WTC11 (cell line): ENCODE measurements at regions of chr16 and their contacts with region 1.

Region 1: GRCh38 chr16:1983544-1984346 is at the start of gene GFER:
- DNase-seq: peak; percentile 95
- ATAC-seq: peak; percentile 78
- H3K4me3 Mint-ChIP-seq: peak within 1 kb of the TSS; percentile 81
- H3K27ac Mint-ChIP-seq: peak within 1 kb of the TSS; percentile 80
- H3K4me1 Mint-ChIP-seq: peaks cover 30% of the 10 kb centered on the region
- H3K27me3 Mint-ChIP-seq: peaks cover 42% of the 10 kb centered on the region
- CTCF ChIP-seq: no peak
- total RNA-seq, gene GFER: 56.0 to 58.5 TPM (median 57.0 TPM) in 3 replicates

Region 2: GRCh38 chr16:1884155-1884760 is 99.5 kb before region 1 on chr16:
- CTCF ChIA-PET with region 1: no interaction called
- POLR2A ChIA-PET with region 1: no interaction called
- DNase-seq: no peak
- ATAC-seq: no peak
- H3K4me3 Mint-ChIP-seq: no peak overlapping the region
- H3K27ac Mint-ChIP-seq: no peak overlapping the region
- H3K4me1 Mint-ChIP-seq: no peaks in the 10 kb centered on the region
- H3K27me3 Mint-ChIP-seq: peaks cover 4% of the 10 kb centered on the region; the same call in 1 of the 2 replicates
- CTCF ChIP-seq: no peak

Region 3: GRCh38 chr16:1964506-1965395 is 19.0 kb before region 1 on chr16 and contains the start of gene RPS2:
- CTCF ChIA-PET with region 1: interaction called, 4 read pairs
- POLR2A ChIA-PET with region 1: interaction called, 20 read pairs
- DNase-seq: peak; percentile 99
- ATAC-seq: peak; percentile 51
- H3K4me3 Mint-ChIP-seq: peak within 1 kb of the TSS; percentile 94
- H3K27ac Mint-ChIP-seq: peak within 1 kb of the TSS; percentile 97
- H3K4me1 Mint-ChIP-seq: peaks cover 39% of the 10 kb centered on the region
- H3K27me3 Mint-ChIP-seq: no peaks in the 10 kb centered on the region
- CTCF ChIP-seq: no peak
- total RNA-seq, gene RPS2: 4,395 to 4,767 TPM (median 4,632 TPM) in 3 replicates

Region 4: GRCh38 chr16:2121853-2122252 is 138.1 kb after region 1 on chr16:
- CTCF ChIA-PET with region 1: no interaction called
- POLR2A ChIA-PET with region 1: no interaction called
- DNase-seq: no peak
- ATAC-seq: no peak
- H3K4me3 Mint-ChIP-seq: no peak overlapping the region
- H3K27ac Mint-ChIP-seq: peak overlapping the region; percentile 19; the same call in 1 of the 2 replicates
- H3K4me1 Mint-ChIP-seq: peaks cover 14% of the 10 kb centered on the region
- H3K27me3 Mint-ChIP-seq: no peaks in the 10 kb centered on the region
- CTCF ChIP-seq: no peak

Region 5: DNA sequence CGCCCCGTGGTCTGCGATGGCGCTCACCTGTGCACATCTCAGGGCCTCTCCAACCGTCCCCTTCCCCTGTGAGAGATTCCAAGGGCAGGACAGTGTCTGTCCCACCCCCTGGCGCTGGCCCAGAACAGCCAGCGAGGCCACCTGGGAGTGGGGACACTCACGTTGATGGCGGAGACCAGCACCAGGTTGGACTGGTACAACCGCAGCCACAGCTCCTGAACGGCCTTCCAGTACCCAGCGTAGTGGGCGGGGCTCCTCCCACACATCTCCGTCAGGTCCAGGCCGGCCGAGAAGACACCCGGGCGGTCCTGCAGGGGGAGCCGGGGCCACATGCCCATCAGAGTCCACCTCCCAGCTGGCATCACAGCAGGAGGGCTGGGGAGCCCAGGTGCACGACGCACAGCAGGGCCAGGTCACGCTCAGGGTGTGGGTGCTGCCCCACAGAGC is 260.5 kb after region 1 on chr16:
- CTCF ChIA-PET with region 1: no interaction called
- POLR2A ChIA-PET with region 1: no interaction called
- DNase-seq: peak; percentile 56
- ATAC-seq: peak; percentile 46
- H3K4me3 Mint-ChIP-seq: no peak overlapping the region
- H3K27ac Mint-ChIP-seq: no peak overlapping the region
- H3K4me1 Mint-ChIP-seq: no peaks in the 10 kb centered on the region
- H3K27me3 Mint-ChIP-seq: no peaks in the 10 kb centered on the region; the same call in 1 of the 2 replicates
- CTCF ChIP-seq: no peak